Dendritic cell treated with granulocyte-macrophage colony-stimulating factor and Interleukin-4, amounts not matched to agents 40 ng/mL and 50 ng/mL, for 4 days (primary cell): ENCODE measurements at regions of chr16 and their contacts with region 1.

Region 1: GRCh38 chr16:31507929-31508705 is at the start of gene RUSF1:
- H3K4me3 Mint-ChIP-seq: peak within 1 kb of the TSS; percentile 89
- H3K27ac Mint-ChIP-seq: peak within 1 kb of the TSS; percentile 97
- H3K4me1 Mint-ChIP-seq: peaks cover 35% of the 10 kb centered on the region
- H3K27me3 Mint-ChIP-seq: no peaks in the 10 kb centered on the region

Region 2: GRCh38 chr16:31459722-31460581 is 48.2 kb before region 1 on chr16:
- intact Hi-C with region 1: loop called (anchors 1 kb)
- H3K4me3 Mint-ChIP-seq: peak overlapping the region; percentile 89
- H3K27ac Mint-ChIP-seq: peak overlapping the region; percentile 99
- H3K4me1 Mint-ChIP-seq: peaks cover 49% of the 10 kb centered on the region
- H3K27me3 Mint-ChIP-seq: no peaks in the 10 kb centered on the region